PC-9 (cell line): ENCODE measurements at regions of chr1 and their contacts with region 1.

Region 1: DNA sequence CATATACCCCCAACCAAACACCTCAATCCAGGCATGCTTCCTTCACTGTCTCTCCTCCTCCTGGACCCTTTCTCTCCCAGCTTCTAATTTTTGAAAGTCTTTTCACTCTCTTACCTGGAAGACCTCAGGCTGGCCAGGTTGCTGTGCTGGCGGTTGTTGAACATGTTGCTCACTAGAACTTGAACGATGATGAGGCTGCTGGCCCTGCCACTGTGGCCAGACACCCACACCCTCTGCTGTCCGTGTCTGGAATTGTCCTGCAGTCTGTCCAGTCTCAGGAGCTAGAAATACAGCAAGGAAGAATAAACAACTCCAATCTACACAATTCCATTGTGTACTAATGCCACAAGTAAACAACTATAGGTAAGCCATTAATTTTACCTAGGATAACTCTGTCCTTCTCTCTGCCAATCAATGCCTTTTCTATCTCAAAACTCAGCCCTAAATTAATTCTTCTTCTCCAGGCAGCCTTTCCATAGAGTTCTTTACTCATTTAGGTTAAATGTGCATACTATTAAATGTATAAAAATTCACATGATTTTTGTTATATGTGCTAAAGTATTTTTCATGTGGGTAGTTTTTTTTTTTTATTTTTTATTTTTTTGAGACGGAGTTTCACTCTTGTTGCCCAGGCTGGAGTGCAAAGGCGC is 5.1 kb upstream of the CTSK start:
- DNase-seq: peak; percentile 38 to 75
- H3K4me3 ChIP-seq: no peak overlapping the region
- H3K27ac ChIP-seq: no peak overlapping the region
- H3K4me1 ChIP-seq: no peaks in the 10 kb centered on the region
- H3K27me3 ChIP-seq: no peaks in the 10 kb centered on the region
- CTCF ChIP-seq: peak; percentile 85

Region 2: DNA sequence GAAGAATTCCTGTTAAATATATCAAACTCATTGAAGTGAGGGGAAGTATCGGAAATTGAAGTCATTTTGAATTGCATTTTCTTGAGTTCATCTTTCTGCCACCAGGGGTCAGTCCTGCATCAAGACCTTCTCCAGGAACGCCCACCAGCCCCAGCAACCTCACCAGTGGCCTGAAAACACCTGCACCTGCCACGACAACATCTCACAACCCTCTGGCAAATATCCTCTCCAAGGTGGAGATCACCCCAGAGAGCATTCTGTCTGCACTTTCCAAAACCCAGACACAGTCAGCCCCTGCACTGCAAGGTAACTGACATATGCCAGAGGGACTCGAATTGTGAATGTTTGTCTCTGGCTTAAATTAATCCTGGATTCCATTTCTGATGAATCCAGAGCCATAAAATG is 348.8 kb before region 1 on chr1:
- CTCF ChIA-PET with region 1: no interaction called
- POLR2A ChIA-PET with region 1: no interaction called
- intact Hi-C with region 1: loop called (anchors 5 kb)
- DNase-seq: peak; percentile 35 to 49
- H3K4me3 ChIP-seq: no peak overlapping the region
- H3K27ac ChIP-seq: no peak overlapping the region
- H3K4me1 ChIP-seq: no peaks in the 10 kb centered on the region
- H3K27me3 ChIP-seq: no peaks in the 10 kb centered on the region
- CTCF ChIP-seq: peak; percentile 83

Region 3: GRCh38 chr1:150621497-150622302 is 191.5 kb before region 1 on chr1:
- CTCF ChIA-PET with region 1: interaction called, 3 read pairs
- POLR2A ChIA-PET with region 1: no interaction called
- intact Hi-C with region 1: loop called (anchors 5 kb)
- DNase-seq: no peak
- H3K4me3 ChIP-seq: no peak overlapping the region
- H3K27ac ChIP-seq: peak overlapping the region; percentile 9; the same call in 1 of the 2 replicates
- H3K4me1 ChIP-seq: peaks cover 57% of the 10 kb centered on the region
- H3K27me3 ChIP-seq: no peaks in the 10 kb centered on the region
- CTCF ChIP-seq: peak; percentile 73

Region 4: GRCh38 chr1:150696590-150697524 is 116.3 kb before region 1 on chr1 and contains the start of gene GOLPH3L:
- CTCF ChIA-PET with region 1: interaction called, 12 read pairs
- POLR2A ChIA-PET with region 1: no interaction called
- intact Hi-C with region 1: loop called (anchors 1 kb)
- DNase-seq: peak; percentile 95 to 99
- H3K4me3 ChIP-seq: peak within 1 kb of the TSS; percentile 83
- H3K27ac ChIP-seq: peak within 1 kb of the TSS; percentile 40
- H3K4me1 ChIP-seq: peaks cover 10% of the 10 kb centered on the region
- H3K27me3 ChIP-seq: no peaks in the 10 kb centered on the region
- CTCF ChIP-seq: no peak
- total RNA-seq, gene GOLPH3L: 36.5 and 52.7 TPM in 2 replicates

Region 5: DNA sequence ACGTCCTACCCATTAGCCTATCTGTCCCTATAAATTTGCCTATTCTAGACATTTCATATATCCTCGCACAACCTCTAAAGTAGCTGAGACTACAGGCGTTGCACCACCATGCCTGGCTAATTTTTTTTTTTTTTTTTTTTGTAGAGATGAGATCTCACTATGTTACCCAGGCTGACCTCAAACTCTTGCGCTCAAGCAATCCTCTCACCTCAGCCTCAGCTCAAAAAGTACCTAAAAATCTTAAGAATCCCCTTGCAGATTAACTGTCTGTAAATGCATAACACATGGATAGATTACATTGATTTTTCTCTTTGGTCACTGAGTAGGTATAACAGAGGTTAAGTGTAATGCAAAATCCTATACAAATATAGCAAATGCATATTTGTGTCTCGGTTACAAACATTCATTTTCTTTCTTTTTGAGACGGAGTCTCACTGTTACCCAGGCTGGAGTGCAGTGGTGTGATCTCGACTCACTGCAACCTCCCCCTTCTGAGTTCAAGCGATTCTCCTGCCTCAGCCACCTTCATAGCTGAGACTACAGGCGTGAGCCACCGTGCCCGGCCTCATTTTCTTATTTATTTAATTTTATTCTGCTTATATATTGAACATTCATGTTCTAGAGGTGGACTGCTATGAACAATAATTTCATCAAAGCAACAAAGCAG is 94.8 kb before region 1 on chr1:
- CTCF ChIA-PET with region 1: interaction called, 13 read pairs
- POLR2A ChIA-PET with region 1: no interaction called
- intact Hi-C with region 1: no loop called
- DNase-seq: no peak
- H3K4me3 ChIP-seq: no peak overlapping the region
- H3K27ac ChIP-seq: no peak overlapping the region
- H3K4me1 ChIP-seq: no peaks in the 10 kb centered on the region
- H3K27me3 ChIP-seq: no peaks in the 10 kb centered on the region
- CTCF ChIP-seq: no peak

Region 6: DNA sequence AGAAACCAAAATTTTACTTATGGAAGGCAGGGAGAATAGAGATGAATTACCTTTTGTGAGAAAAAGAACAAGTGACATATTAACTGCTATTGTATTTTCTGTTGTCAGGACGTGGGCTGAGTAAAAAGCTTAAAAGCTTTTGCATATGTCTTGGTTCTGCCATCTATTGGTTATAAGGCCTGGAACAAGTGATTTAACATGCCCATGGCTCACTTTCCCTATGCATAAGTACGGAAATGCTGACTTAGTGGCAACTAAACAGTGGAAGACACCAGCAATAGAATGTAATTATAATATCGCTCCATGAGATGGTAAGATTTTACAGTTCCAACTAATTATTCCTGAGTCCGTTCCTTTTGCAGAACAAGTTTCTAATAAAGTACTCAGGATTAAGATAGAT is 40.9 kb before region 1 on chr1:
- CTCF ChIA-PET with region 1: no interaction called
- POLR2A ChIA-PET with region 1: no interaction called
- intact Hi-C with region 1: no loop called
- DNase-seq: no peak
- H3K4me3 ChIP-seq: no peak overlapping the region
- H3K27ac ChIP-seq: no peak overlapping the region
- H3K4me1 ChIP-seq: no peaks in the 10 kb centered on the region
- H3K27me3 ChIP-seq: no peaks in the 10 kb centered on the region
- CTCF ChIP-seq: no peak

Region 7: DNA sequence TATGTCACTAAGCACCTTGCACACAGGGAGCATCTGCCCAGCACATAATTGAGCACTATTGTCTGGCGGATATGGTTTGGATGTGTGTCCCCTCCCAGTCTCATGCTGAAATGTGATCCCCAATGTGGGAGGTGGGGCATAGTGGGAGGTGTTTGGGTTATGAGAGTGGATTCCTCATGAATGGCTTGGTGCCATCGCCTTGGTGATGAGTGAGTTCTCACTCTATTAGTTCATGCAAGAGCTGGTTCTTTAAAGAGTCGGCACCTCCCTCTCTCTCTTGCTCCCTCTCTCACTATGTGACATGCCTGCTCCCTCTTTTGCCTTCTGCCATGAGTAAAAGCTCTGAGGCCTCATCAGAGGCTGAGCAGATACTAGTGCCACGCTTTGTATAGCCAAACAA is 14.7 kb before region 1 on chr1:
- CTCF ChIA-PET with region 1: no interaction called
- POLR2A ChIA-PET with region 1: no interaction called
- intact Hi-C with region 1: no loop called
- DNase-seq: no peak
- H3K4me3 ChIP-seq: no peak overlapping the region
- H3K27ac ChIP-seq: no peak overlapping the region
- H3K4me1 ChIP-seq: no peaks in the 10 kb centered on the region
- H3K27me3 ChIP-seq: no peaks in the 10 kb centered on the region
- CTCF ChIP-seq: no peak

Region 8: GRCh38 chr1:150995896-150996295 is 182.7 kb after region 1 on chr1:
- CTCF ChIA-PET with region 1: interaction called, 3 read pairs
- POLR2A ChIA-PET with region 1: no interaction called
- intact Hi-C with region 1: loop called (anchors 10 kb)
- DNase-seq: peak in 1 of 2 experiments; percentile 43
- H3K4me3 ChIP-seq: no peak overlapping the region
- H3K27ac ChIP-seq: no peak overlapping the region
- H3K4me1 ChIP-seq: 0 out of 2 replicates have a peak, but pooled peaks cover 5% of the 10 kb centered on the region
- H3K27me3 ChIP-seq: no peaks in the 10 kb centered on the region
- CTCF ChIP-seq: peak; percentile 97

Region 9: GRCh38 chr1:151098126-151098525 is 284.9 kb after region 1 on chr1:
- CTCF ChIA-PET with region 1: no interaction called
- POLR2A ChIA-PET with region 1: no interaction called
- intact Hi-C with region 1: no loop called
- DNase-seq: no peak
- H3K4me3 ChIP-seq: no peak overlapping the region
- H3K27ac ChIP-seq: no peak overlapping the region
- H3K4me1 ChIP-seq: peaks cover 3% of the 10 kb centered on the region; the same call in 1 of the 2 replicates
- H3K27me3 ChIP-seq: no peaks in the 10 kb centered on the region
- CTCF ChIP-seq: no peak